Left lung (tissue), 14 donors: ENCODE measurements at regions of chr4 and their contacts with region 1.

Region 1: GRCh38 chr4:99405433-99406115 is 29.6 kb downstream of the ADH7 start:
- DNase-seq: peak in 3 of 4 donors; percentile 42 to 89 (median 83)
- ATAC-seq: peak; percentile 88
- H3K4me3 ChIP-seq: no peak overlapping the region
- H3K27ac ChIP-seq: peak overlapping the region; percentile 52 to 68
- H3K4me1 ChIP-seq: peaks cover 12 to 16% of the 10 kb centered on the region in 2 donors
- H3K27me3 ChIP-seq: no peaks in the 10 kb centered on the region
- CTCF ChIP-seq: peak; percentile 83 to 87

Region 2: DNA sequence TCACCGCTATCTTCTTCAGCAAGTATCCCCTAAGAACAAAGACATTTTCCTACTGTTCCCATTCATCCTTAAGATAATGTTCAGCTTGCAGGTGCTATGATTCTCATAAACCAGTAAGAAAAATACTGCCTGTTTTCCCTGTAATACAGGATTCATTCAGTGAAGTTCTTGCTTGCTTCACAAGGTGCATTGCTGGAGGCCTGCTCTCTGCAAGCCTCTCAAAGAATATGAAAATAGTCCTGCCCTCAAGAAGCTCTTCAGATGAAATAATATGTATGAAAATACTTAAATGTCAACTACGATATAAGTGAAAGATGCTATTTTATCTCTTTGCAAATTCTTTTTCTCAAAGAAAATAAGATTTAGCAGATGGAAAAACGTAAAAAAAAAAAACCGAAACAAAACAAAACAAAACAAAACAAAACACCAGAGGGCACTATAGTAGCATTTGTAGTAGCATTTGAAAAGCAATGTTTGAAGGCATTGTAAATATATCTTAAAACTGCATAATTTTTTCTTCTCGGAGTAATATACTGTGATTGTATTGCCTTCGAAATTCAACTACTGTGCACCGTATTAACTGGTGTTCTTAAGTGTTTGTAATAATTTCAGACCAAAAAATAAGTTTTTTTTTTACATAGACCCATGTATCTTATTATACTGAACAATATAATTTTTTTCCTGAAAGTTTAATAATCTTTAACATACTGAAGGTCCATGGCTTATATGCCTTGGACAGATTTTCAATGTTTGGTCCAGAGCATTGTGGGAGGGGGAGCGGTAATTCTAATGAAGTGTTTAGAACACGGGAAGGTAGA is 287.5 kb before region 1 on chr4:
- intact Hi-C with region 1: loop called in 1 of 2 experiments (anchors 5 kb)
- DNase-seq: peak in 2 of 4 donors; percentile 18 to 22
- ATAC-seq: peak; percentile 46
- H3K4me3 ChIP-seq: no peak overlapping the region
- H3K27ac ChIP-seq: no peak overlapping the region
- H3K4me1 ChIP-seq: no peaks in the 10 kb centered on the region
- H3K27me3 ChIP-seq: no peaks in the 10 kb centered on the region
- CTCF ChIP-seq: peak in 1 of 2 donors; percentile 23

Region 3: DNA sequence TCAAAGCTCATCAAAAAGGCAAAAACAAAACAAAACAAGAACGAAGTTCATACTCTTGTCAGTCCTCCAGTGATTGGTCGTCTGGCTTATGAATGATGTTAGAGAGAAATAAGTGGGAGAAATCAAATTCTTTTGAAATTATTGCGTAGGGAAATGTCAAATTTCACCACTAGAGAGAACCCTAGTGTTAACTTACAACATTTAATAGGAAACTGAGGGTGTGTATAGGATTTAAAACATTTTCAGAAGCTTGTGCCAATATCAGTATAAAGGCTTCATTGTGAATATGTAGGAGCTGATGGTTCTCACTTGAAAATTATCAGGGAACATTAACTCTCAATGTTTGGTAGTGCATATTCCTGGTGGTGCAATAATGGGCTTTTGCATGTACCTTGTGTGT is 203.9 kb before region 1 on chr4:
- intact Hi-C with region 1: loop called in 1 of 2 experiments (anchors 5 kb)
- DNase-seq: peak in 1 of 4 donors; percentile 52
- ATAC-seq: peak; percentile 52
- H3K4me3 ChIP-seq: no peak overlapping the region
- H3K27ac ChIP-seq: no peak overlapping the region
- H3K4me1 ChIP-seq: peaks cover 0 to 20% of the 10 kb centered on the region in 2 donors
- H3K27me3 ChIP-seq: no peaks in the 10 kb centered on the region
- CTCF ChIP-seq: peak in 1 of 2 donors; percentile 10